Activated CD4-positive, alpha-beta T cell treated with anti-CD3 and anti-CD28 coated beads, Interleukin-2, amount 10 ng/mL, durations not matched to agents 24 days and 14 days (primary cell): ENCODE measurements at regions of chr7 and their contacts with region 1.

Region 1: DNA sequence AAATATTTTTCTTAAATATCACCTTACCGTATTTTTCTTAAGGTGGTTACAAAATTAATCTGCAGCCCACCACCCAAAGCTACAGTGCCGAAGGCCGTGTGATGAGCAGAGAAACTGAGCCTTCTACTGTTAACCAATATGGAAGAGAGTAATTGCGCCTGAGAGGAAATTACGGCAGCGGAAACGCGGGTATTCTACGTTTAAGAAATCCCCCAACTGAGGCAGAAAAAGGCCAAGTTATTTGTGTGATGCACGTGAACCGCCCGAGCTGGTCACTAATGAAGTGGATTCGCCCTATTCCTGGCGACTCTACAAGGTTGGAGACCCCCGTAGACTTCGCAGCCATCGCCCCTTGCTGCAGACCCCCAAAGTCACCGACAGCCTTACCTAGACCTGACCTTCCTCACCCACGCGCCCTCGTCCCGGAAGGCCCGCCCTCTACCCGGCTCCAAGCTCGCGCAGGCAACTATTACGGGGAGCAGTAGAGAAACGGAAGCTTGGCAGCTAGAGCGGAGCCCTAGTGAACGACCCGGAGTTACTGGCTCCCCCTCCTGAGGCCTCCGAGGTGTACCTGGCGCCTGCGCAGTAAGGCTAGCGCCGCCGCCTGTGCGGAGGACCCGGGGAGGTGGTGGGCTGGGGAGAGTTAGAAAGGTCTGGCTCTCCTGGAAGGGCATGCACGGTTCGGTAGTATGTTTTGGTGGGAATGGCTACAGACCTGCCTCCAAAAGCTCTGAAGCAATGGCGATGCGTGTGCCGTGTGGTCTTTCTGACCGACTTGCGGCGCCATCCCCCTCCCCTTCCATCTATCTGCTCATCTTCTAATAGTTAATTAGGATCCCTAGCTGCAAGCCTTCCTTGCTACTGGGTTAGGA is at the start of gene MRPS33:
- DNase-seq: peak; percentile 98
- H3K4me3 Mint-ChIP-seq: peak within 1 kb of the TSS; percentile 99
- H3K27ac Mint-ChIP-seq: peak within 1 kb of the TSS; percentile 100
- H3K4me1 Mint-ChIP-seq: peaks cover 30% of the 10 kb centered on the region
- H3K27me3 Mint-ChIP-seq: peaks cover 19% of the 10 kb centered on the region
- total RNA-seq, gene MRPS33: 73.0 and 74.2 TPM in 2 replicates

Region 2: DNA sequence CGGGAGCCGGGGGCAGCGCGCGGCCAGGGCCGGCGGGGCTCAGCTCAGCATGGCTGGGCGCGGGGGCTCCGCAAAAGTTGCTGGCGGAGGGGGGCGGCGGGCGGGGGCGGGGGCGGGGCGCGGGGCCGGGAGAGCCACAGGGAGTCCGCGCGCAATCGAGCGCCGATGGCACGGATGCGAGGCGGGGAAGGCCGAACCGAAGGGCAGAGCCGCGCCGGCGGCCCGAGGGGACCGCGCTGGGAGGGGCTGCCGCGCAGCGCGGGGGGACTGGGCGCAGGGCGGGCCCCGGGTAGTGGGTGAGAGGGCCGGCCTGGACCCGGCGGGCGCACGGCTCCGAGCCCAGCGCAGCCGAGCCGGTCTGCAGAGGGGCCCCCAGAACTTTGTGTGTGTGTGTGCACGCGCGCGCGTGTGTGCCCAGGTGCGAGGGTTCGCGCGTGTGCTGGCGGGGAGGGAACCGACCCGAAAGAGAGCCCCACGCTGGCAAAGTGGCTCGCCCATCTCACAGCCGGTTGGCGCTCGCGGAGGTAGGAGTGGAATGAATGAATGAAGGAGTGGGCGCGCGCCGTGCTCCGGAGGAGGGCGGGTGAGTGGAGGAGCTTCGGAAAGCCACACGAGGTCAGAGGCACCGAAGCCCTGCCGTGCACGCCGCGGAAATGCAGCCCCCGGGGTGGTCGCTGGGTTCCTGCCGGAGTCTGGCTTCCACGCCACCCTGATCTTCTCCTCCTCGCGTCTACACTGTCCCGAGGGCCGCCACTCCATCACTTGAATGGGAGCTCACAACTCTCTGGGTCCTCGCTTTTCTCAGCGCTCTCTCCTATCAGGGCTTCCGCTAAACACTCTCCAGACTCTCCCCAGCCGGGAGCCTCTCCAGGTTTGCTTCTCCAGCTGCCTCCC is 1236.6 kb before region 1 on chr7 and contains the start of gene HIPK2:
- intact Hi-C with region 1: loop called (anchors 10 kb)
- DNase-seq: peak; percentile 92
- H3K4me3 Mint-ChIP-seq: peak within 1 kb of the TSS; percentile 99
- H3K27ac Mint-ChIP-seq: peak within 1 kb of the TSS; percentile 99
- H3K4me1 Mint-ChIP-seq: peaks cover 50% of the 10 kb centered on the region
- H3K27me3 Mint-ChIP-seq: peaks cover 20% of the 10 kb centered on the region
- total RNA-seq, gene HIPK2: 23.9 and 26.1 TPM in 2 replicates

Region 3: GRCh38 chr7:140506788-140507464 is 507.8 kb before region 1 on chr7:
- intact Hi-C with region 1: no loop called
- DNase-seq: no peak
- H3K4me3 Mint-ChIP-seq: no peak overlapping the region
- H3K27ac Mint-ChIP-seq: no peak overlapping the region
- H3K4me1 Mint-ChIP-seq: no peaks in the 10 kb centered on the region
- H3K27me3 Mint-ChIP-seq: no peaks in the 10 kb centered on the region

Region 4: GRCh38 chr7:140653319-140654108 is 361.2 kb before region 1 on chr7:
- intact Hi-C with region 1: loop called (anchors 5 kb)
- DNase-seq: peak; percentile 80
- H3K4me3 Mint-ChIP-seq: no peak overlapping the region
- H3K27ac Mint-ChIP-seq: no peak overlapping the region
- H3K4me1 Mint-ChIP-seq: peaks cover 19% of the 10 kb centered on the region
- H3K27me3 Mint-ChIP-seq: peaks cover 37% of the 10 kb centered on the region

Region 5: GRCh38 chr7:140726281-140726680 is 288.5 kb before region 1 on chr7:
- intact Hi-C with region 1: loop called (anchors 1 kb)
- DNase-seq: no peak
- H3K4me3 Mint-ChIP-seq: no peak overlapping the region
- H3K27ac Mint-ChIP-seq: no peak overlapping the region
- H3K4me1 Mint-ChIP-seq: peaks cover 11% of the 10 kb centered on the region
- H3K27me3 Mint-ChIP-seq: no peaks in the 10 kb centered on the region

Region 6: DNA sequence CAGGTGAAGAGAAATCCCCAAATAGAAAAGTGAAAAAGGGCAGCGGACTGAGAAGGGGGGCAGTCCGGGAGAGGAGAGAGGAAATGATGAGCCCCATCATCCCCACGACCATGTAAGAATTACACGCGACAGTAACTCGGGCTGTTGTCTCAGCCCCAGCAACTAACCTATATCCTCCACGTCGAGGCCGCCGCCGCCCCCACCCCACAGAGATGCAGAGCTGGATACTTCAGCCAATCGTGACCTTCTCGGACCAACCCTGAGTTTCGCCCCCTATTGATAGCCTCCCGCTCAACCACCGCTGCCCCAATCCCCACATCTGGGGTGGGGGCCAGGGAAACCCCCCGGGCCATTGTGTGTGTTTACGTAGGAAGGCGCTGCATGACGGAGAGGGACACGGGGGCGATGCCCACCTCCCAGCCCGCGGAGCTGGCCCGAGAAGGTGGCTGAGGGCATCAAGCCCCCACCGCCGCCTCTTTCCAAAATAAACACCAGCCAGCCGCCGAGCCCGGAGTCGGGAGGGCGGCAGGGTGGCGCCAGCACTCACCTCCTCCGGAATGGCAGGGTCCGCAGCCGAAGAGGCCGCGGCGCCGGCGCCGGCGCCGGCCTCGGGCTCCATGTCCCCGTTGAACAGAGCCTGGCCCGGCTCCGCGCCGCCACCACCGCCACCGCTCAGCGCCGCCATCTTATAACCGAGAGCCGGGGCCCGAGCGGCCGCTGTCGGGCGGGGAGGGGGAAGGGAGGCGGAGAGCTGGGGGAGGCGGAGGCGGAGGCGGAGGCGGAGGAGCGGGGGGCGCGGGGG is 90.5 kb before region 1 on chr7:
- intact Hi-C with region 1: loop called (anchors 1 kb)
- DNase-seq: peak; percentile 92
- H3K4me3 Mint-ChIP-seq: no peak overlapping the region
- H3K27ac Mint-ChIP-seq: no peak overlapping the region
- H3K4me1 Mint-ChIP-seq: peaks cover 14% of the 10 kb centered on the region
- H3K27me3 Mint-ChIP-seq: peaks cover 11% of the 10 kb centered on the region

Region 7: DNA sequence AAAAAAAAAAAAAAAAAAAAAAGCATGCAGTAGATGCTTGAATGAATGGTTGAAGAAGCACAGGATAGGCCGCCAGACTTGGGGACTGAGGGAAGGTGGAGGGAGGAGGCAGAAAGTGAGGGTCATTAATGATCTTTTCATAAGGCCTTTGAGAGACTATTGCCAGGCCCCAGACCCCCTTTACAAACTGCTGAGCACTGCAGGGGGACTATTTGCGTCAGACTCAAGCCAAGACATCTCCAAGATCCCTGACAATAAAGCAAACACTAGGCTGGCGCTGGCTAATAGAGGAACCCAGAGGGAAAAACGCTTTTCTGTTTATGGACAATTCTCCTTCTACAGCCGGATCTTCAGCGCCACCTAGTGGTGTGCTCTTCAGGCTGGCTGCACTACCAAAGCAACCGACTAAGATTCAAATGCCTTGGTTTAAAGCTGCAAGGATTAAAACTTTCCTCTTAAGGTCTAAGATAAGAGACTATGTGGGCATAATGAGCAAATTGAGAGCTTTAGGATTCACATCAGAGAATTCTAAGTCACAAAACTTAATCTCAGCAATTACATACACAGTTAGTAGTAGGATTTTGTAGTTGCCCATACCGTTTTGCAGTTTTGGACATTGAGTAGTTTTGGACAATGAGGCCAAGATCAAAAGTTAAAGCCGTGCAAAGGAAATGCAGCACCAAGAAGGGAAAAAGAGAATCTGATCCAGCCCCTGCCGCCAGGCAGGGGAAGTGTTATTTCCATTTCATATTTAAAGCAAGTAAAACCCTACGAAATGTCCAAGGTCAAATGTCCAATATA is 518.6 kb after region 1 on chr7:
- intact Hi-C with region 1: loop called (anchors 2 kb)
- DNase-seq: peak; percentile 87
- H3K4me3 Mint-ChIP-seq: no peak overlapping the region
- H3K27ac Mint-ChIP-seq: no peak overlapping the region
- H3K4me1 Mint-ChIP-seq: peaks cover 3% of the 10 kb centered on the region
- H3K27me3 Mint-ChIP-seq: peaks cover 32% of the 10 kb centered on the region

Region 8: DNA sequence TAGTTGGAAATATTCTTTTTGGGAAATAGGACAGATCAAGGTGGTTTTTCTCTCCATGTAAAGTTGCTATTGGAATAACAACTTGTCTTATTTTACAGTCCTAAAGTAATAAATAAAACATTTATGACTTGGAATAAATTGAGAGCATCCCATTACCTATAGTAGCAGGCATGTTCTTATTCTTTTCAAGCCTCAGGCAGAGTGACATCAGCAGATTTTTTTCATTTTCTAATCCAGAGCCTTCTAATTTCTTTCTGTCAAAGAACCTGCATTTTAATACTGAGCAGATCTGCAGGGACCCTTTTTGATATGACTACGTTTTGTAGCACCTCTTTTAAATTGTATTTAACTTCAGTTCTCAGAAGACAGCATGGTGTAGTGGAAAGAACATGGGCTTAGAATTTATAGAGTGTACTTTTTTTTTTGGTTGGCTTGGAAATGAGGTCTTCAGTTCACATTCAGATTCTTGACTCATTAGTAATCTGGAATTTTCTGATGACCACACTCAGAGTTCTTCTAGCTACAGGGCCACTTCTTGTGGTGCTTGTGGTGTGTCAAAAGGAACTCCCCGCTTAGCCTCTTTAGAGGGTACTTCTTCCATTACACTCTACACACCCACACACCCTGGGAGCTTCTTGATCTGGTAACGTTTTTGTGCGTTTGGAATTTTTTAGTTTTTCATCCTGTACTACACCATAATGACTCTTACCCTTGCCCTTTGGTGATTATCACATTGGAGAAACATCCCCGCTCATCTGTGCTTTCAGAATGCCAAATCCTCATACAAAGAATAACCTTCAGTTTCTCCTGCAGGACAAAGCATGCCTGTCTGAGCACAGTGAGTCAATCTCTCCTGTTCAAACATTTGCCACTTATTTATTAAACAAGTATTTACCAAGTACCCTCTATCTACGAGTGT is 571.1 kb after region 1 on chr7:
- intact Hi-C with region 1: no loop called
- DNase-seq: peak; percentile 65
- H3K4me3 Mint-ChIP-seq: peak overlapping the region; percentile 61
- H3K27ac Mint-ChIP-seq: peak overlapping the region; percentile 94
- H3K4me1 Mint-ChIP-seq: peaks cover 58% of the 10 kb centered on the region
- H3K27me3 Mint-ChIP-seq: no peaks in the 10 kb centered on the region